Left cardiac atrium (tissue), 4 donors: ENCODE measurements at regions of chr4 and their contacts with region 1.

Region 1: DNA sequence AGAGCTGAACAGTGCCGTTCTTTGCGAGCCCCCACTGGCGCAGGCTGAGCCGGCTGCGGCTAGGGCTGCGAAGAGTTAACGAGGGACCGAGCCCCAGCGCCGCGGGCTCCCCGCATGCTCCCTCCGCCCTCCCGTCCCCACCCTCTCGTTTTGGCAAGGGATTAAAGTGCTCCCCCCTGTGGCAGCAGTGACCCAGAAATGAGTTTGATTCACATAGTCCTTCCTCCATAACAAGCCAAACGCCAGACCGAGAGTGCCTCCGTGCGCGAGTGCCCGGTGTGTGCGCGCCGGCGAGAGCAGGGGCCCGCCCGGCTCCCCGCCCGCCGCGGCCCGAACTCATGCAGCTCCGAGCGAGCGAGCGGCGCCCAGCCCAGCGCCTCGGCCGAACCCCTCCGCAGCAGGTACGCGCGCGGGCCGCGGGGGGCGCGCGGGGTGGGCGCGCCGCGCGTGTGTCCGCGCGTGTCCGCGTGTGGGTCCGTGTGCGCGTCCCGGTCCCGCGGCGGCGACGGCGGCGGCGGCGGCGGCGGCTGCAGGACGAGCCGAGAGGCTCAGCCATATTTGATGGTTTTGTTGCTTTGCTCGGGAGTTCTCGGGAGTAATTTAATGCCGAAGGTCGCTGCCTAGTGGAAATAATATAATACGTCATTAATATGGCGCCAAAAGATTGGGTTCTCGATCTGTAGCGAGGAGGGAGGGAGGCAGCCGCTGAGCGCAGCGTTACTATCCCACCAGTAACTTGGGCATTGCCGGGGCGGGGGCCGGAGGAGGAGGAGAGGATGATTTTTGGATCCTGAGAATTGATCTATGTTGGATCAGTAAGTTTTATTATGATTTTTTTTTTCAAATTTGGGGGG is at the start of gene JADE1:
- DNase-seq: peak; percentile 92
- ATAC-seq: peak; percentile 72 to 76
- total RNA-seq, gene JADE1: 22.7 to 32.3 TPM

Region 2: GRCh38 chr4:128550060-128550459 is 259.6 kb before region 1 on chr4:
- intact Hi-C with region 1: no loop called
- DNase-seq: no peak
- ATAC-seq: no peak

Region 3: GRCh38 chr4:128574706-128575105 is 235.0 kb before region 1 on chr4:
- intact Hi-C with region 1: loop called in 1 of 2 experiments (anchors 5 kb)
- DNase-seq: peak; percentile 72
- ATAC-seq: peak; percentile 36 to 54

Region 4: GRCh38 chr4:128688846-128689467 is 120.7 kb before region 1 on chr4:
- intact Hi-C with region 1: no loop called
- DNase-seq: no peak
- ATAC-seq: no peak

Region 5: GRCh38 chr4:128707864-128708263 is 101.8 kb before region 1 on chr4:
- intact Hi-C with region 1: no loop called
- DNase-seq: no peak
- ATAC-seq: no peak